HepG2 (cell line): ENCODE measurements at regions of chr14 and their contacts with region 1.

Region 1: GRCh38 chr14:60724137-60724619 is at the start of gene SIX4:
- DNase-seq: peak; percentile 84
- ATAC-seq: peak; percentile 73
- H3K4me3 ChIP-seq: peak within 1 kb of the TSS; percentile 77 to 96 (median 84)
- H3K27ac ChIP-seq: peak within 1 kb of the TSS; percentile 85
- H3K4me1 ChIP-seq: peaks cover 25% of the 10 kb centered on the region
- H3K27me3 ChIP-seq: no peaks in the 10 kb centered on the region
- CTCF ChIP-seq: no peak
- EP300 ChIP-seq: 0 out of 4 replicates have a peak, but pooled peaks of 1 of the 2 experiments have one; percentile 12
- POLR2A ChIP-seq: peak; percentile 80
- RAD21 ChIP-seq: no peak
- total RNA-seq, gene SIX4: 6.0 and 6.7 TPM in 2 replicates

Region 2: GRCh38 chr14:60648934-60649874 is 75.0 kb before region 1 on chr14 and contains the start of gene SIX1:
- CTCF ChIA-PET with region 1: no interaction called
- POLR2A ChIA-PET with region 1: interaction called, 7 read pairs
- in situ Hi-C with region 1: no loop called
- intact Hi-C with region 1: loop called (anchors 1 kb)
- DNase-seq: peak; percentile 77
- ATAC-seq: peak; percentile 93
- H3K4me3 ChIP-seq: peak within 1 kb of the TSS; percentile 75 to 79 (median 77)
- H3K27ac ChIP-seq: peak within 1 kb of the TSS; percentile 44
- H3K4me1 ChIP-seq: peaks cover 55% of the 10 kb centered on the region
- H3K27me3 ChIP-seq: peaks cover 1 to 27% of the 10 kb centered on the region in 2 experiments; a peak in 4 of 5 replicates
- CTCF ChIP-seq: no peak
- EP300 ChIP-seq: no peak
- POLR2A ChIP-seq: peak; percentile 66 to 86
- RAD21 ChIP-seq: 0 out of 2 replicates have a peak, but pooled peaks have one; percentile 9
- total RNA-seq, gene SIX1: 6.5 and 6.8 TPM in 2 replicates

Region 3: DNA sequence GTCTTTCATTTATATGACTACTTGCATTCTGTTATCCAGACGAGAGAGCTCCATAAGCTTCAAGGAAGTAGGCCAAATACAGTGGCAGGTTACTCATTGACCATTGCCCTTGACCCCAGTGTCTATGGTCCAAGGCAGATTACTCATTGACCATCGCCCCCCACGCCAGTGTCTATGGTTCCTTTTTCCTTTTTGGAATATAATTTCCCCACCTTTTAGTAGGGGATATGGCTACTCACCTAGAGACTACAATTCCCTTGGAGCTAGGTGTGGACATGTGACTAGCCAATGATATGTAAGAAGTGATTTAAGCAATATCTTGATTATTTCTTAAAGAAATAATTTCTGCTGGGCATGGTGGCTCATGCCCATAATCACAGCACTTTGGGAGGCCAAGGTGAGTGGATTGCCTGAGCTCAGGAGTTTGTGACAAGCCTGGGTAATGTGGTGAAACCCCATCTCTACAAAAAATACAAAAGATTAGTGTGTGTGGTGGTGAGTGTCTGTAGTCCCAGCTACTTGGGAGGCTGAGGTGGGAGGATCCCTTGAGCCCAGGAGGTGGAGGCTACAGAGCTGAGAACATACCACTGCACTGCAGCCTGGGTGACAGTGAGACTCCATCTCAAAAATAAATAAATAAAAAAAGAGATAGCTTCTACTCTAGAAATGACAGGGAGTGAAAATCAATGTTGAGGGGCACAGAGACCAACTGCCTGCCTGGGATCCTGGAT is 32.6 kb before region 1 on chr14:
- CTCF ChIA-PET with region 1: no interaction called
- POLR2A ChIA-PET with region 1: interaction called, 38 read pairs
- in situ Hi-C with region 1: no loop called
- intact Hi-C with region 1: no loop called
- DNase-seq: peak; percentile 77
- ATAC-seq: peak; percentile 94
- H3K4me3 ChIP-seq: peak overlapping the region in 2 of 3 experiments; percentile 20 to 24; a peak in 2 of 6 replicates
- H3K27ac ChIP-seq: peak overlapping the region; percentile 60
- H3K4me1 ChIP-seq: peaks cover 68% of the 10 kb centered on the region
- H3K27me3 ChIP-seq: no peaks in the 10 kb centered on the region
- CTCF ChIP-seq: no peak
- EP300 ChIP-seq: peak in 1 of 2 experiments; percentile 66; a peak in 2 of 4 replicates
- POLR2A ChIP-seq: no peak
- RAD21 ChIP-seq: no peak

Region 4: DNA sequence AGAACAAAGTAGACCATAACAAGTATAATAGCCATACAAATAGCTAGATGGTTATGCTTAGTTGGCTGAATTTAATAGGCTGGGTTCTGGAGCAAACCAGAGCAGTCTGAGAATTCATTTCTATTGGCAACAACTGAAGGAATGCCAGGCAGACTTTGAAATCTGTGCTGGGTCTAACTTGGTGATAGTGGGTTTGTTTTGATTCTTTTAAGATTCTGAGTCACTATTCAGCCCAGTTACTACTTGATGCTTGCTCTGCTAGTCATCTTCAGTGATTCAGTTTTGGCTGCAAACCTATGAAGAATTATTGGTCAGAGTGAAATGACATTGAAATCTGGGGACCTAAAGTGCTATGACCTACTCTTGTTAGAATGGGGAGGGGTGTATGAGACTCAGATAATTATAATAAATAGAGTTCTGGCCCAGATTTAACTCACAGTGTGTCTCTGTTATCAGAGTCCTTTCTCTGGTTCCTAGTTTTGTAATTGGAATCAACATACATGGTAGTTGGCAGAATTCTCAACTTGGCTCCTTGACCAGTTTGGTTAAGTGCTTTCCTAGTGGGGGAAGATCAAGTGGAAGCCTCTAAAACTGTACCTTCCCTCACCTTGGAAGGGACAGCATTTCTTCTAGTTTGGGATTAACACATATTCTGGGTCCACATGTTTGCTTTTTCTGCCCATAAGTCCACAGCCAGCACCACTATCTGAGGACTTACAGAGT is 53.8 kb after region 1 on chr14:
- CTCF ChIA-PET with region 1: no interaction called
- POLR2A ChIA-PET with region 1: no interaction called
- in situ Hi-C with region 1: no loop called
- intact Hi-C with region 1: no loop called
- DNase-seq: no peak
- ATAC-seq: no peak
- H3K4me3 ChIP-seq: no peak overlapping the region
- H3K27ac ChIP-seq: no peak overlapping the region
- H3K4me1 ChIP-seq: no peaks in the 10 kb centered on the region
- H3K27me3 ChIP-seq: no peaks in the 10 kb centered on the region
- CTCF ChIP-seq: no peak
- EP300 ChIP-seq: no peak
- POLR2A ChIP-seq: no peak
- RAD21 ChIP-seq: no peak

Region 5: DNA sequence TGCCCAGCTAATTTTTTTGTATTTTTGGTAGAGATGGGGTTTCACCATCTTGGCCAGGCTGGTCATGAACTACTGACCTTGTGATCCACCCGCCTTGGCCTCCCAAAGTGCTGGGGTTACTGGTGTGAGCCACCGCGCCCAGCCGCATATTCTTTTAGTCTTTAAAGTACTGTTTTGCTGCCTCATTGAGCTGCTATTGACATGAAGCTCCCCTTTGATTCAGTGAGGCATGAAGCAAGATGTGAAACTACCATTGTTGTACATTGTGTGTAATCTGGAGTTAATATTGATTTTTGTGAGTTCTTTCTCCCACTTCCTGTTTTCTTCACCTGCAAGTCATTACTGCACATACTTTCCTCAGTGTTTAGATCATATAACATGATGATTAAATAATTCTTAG is 91.2 kb after region 1 on chr14:
- CTCF ChIA-PET with region 1: no interaction called
- POLR2A ChIA-PET with region 1: no interaction called
- in situ Hi-C with region 1: no loop called
- intact Hi-C with region 1: loop called (anchors 1 kb)
- DNase-seq: peak; percentile 89
- ATAC-seq: peak; percentile 90
- H3K4me3 ChIP-seq: no peak overlapping the region
- H3K27ac ChIP-seq: peak overlapping the region; percentile 59
- H3K4me1 ChIP-seq: peaks cover 49% of the 10 kb centered on the region
- H3K27me3 ChIP-seq: no peaks in the 10 kb centered on the region
- CTCF ChIP-seq: no peak
- EP300 ChIP-seq: peak in 1 of 2 experiments; percentile 82; a peak in 2 of 4 replicates
- POLR2A ChIP-seq: no peak
- RAD21 ChIP-seq: no peak

Region 6: DNA sequence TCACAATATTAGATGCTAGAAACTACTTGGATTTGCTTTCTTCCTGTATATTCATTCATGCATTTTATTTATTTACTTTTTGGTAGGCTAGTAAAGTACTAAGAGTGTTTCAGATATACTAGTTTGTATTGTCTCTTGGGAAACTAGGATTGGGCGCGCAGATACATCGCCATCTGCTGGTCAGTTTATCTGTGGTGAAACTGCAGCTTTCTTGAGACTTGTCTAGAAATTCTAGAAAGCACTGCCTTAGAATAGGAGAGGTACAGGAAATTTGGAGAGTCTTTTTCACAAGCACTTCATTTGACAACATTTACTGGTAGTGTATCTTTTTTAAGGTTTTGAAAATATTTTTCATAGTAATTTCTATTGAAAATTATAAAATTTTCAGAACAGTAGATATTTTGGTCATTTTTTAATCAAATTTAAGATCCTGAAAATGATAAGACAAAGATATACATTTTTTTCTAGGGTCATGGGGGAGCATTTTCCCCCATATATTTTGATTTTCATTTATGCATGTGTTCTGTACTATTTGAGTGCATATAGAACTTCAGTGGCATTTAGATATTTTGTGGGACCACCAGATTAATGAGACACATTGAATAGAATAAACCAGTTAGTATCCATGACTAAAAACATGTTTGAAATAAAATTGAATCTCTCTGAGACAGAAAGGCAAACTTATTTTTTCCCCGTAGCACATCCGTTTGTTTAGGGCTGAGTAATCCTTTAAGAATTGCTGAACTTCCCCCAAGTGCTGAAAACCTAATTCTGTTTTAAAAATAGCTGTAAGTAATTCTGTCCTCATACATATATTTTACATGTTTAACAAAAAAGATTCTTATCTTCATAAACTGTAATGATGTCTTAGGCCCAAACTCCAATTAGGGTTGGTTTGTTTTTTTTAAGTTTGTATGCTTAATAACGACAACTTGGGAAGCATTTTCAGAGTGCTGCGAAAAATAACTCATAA is 301.4 kb after region 1 on chr14:
- CTCF ChIA-PET with region 1: no interaction called
- POLR2A ChIA-PET with region 1: no interaction called
- in situ Hi-C with region 1: no loop called
- intact Hi-C with region 1: loop called (anchors 2 kb)
- DNase-seq: peak; percentile 57
- ATAC-seq: peak; percentile 59; the same call in 2 of the 3 replicates
- H3K4me3 ChIP-seq: no peak overlapping the region
- H3K27ac ChIP-seq: no peak overlapping the region
- H3K4me1 ChIP-seq: peaks cover 10% of the 10 kb centered on the region; the same call in 1 of the 2 replicates
- H3K27me3 ChIP-seq: no peaks in the 10 kb centered on the region
- CTCF ChIP-seq: peak; percentile 80
- EP300 ChIP-seq: no peak
- POLR2A ChIP-seq: no peak
- RAD21 ChIP-seq: peak; percentile 61

Region 7: GRCh38 chr14:61252369-61253063 is 528.3 kb after region 1 on chr14:
- CTCF ChIA-PET with region 1: no interaction called
- POLR2A ChIA-PET with region 1: no interaction called
- in situ Hi-C with region 1: no loop called
- intact Hi-C with region 1: loop called (anchors 5 kb)
- DNase-seq: peak; percentile 77
- ATAC-seq: peak; percentile 98
- H3K4me3 ChIP-seq: no peak overlapping the region
- H3K27ac ChIP-seq: no peak overlapping the region
- H3K4me1 ChIP-seq: peaks cover 11% of the 10 kb centered on the region
- H3K27me3 ChIP-seq: peaks cover 0 to 3% of the 10 kb centered on the region in 2 experiments; a peak in 3 of 5 replicates
- CTCF ChIP-seq: peak; percentile 91
- EP300 ChIP-seq: no peak
- POLR2A ChIP-seq: no peak
- RAD21 ChIP-seq: peak; percentile 86